Dendritic cell treated with granulocyte-macrophage colony-stimulating factor and Interleukin-4, amounts not matched to agents 40 ng/mL and 50 ng/mL, for 4 days (primary cell): ENCODE measurements at regions of chrX and their contacts with region 1.

Region 1: DNA sequence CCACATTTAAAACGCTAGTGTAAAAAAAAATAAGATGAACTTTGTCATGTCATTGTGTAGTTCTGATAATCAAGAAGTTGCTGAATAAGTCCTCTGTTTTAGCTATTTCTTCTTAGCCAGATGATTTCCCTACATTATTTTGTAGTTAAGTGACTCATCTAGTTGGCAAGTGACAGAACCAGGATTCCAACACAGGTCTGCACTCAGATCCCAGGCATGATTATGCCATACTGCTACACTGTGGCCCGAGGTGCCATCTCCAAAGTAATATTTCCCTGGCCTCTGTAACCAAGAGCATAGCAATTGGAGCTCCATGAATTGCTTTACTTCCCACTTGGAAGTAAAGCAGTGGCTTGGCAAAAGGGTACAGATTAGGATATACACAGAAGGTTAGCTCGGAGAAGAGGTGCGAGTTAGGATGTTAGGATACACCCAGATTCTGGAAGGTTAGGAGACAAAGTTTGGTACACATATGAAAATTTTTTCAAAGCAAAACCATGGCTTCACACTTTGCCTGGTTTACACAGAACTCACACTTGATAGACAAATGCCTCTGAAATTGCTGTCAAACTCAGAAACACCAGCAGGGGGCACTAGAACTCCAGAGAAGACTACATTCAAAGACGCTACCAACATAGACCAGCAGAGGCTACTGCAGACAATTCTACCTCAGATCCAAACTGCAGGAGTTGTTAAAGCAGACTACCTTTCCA is 41.4 kb downstream of the SRPX2 start:
- H3K4me3 Mint-ChIP-seq: no peak overlapping the region
- H3K27ac Mint-ChIP-seq: no peak overlapping the region
- H3K4me1 Mint-ChIP-seq: peaks cover 6% of the 10 kb centered on the region
- H3K27me3 Mint-ChIP-seq: peaks cover 11% of the 10 kb centered on the region

Region 2: GRCh38 chrX:100512471-100512870 is 173.0 kb before region 1 on chrX:
- intact Hi-C with region 1: loop called (anchors 10 kb)
- H3K4me3 Mint-ChIP-seq: no peak overlapping the region
- H3K27ac Mint-ChIP-seq: no peak overlapping the region
- H3K4me1 Mint-ChIP-seq: no peaks in the 10 kb centered on the region
- H3K27me3 Mint-ChIP-seq: peaks cover 2% of the 10 kb centered on the region

Region 3: GRCh38 chrX:100768679-100769338 is 83.4 kb after region 1 on chrX:
- intact Hi-C with region 1: loop called (anchors 1 kb)
- H3K4me3 Mint-ChIP-seq: no peak overlapping the region
- H3K27ac Mint-ChIP-seq: no peak overlapping the region
- H3K4me1 Mint-ChIP-seq: peaks cover 8% of the 10 kb centered on the region
- H3K27me3 Mint-ChIP-seq: peaks cover 6% of the 10 kb centered on the region

Region 4: GRCh38 chrX:101287402-101287801 is 602.0 kb after region 1 on chrX:
- intact Hi-C with region 1: loop called (anchors 10 kb)
- H3K4me3 Mint-ChIP-seq: no peak overlapping the region
- H3K27ac Mint-ChIP-seq: no peak overlapping the region
- H3K4me1 Mint-ChIP-seq: no peaks in the 10 kb centered on the region
- H3K27me3 Mint-ChIP-seq: peaks cover 5% of the 10 kb centered on the region